Cardiac septum (tissue), 1 donor: ENCODE measurements at regions of chr14 and their contacts with region 1.

Region 1: GRCh38 chr14:22556990-22557623 is 31.9 kb downstream of the DAD1 start:
- DNase-seq: peak; percentile 93

Region 2: DNA sequence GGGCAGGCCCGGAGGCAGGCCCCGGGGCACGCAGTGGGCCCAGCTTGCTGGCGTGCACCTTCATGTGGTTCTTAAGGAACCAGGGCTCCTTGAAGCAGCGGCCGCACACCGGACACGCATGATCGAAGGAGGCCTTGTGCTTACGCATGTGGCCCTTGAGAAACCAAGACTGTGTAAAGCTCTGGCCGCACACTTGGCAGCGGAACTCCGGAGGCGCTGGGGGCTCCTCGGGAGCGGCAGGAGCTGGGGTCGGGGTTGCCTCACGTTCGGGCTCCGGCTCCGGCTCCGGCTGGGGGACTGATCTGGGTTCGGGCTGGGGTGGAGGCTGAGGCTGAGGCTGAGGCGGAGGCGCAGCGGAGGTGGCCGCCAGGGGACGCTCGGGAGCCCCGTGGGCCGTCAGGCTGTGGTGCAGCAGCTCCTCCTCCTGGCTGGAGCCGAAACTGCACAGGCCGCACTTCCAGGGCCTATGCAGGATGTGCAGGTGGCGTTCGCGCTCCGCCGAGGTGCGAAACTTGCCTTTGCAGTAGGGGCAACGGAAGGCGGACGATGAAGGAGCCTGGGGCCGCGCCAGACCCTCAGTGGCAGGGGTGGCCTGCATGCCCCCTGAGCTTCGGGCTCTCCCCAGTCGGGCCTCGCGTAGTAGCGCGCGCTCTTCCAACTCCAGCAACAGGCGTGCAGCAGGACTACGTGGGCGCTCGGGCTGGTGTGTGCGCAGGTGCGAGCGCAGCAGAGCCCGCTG is 1464.7 kb before region 1 on chr14:
- intact Hi-C with region 1: no loop called
- DNase-seq: peak; percentile 96

Region 3: DNA sequence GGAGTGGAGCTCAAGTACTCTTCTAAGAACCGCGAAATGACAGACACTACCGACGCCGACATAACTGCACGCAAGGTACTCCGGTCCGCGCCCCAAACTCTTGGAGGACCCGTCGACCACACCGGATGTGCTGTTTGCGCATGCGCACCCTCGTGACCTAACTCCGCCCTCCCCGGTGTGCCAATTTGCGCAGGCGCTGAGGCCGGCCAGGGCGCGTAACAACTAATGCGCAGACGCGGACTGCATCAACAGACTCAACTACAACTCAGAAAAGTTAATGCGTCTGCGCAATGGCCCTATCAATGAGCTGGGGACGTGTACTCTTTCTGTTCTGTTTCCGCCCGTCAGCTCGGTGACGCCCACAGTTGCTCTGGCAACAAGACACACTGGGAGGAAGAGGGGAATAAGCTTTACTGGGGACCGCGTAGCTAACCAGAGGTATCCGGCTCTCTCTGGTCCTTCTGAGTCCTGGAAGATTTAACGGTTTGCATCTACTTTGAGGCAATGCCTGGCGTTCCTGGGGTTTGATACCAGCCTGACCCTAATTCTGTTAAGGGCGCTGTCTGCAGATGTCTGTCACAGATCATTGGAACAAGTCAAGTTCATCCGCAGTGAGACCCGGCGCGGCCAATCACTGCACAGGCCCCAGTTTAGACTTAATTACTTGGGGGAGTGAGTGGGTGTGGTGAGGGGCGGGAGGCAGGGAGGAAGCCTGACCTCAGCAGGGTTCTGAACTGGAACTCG is 32.2 kb after region 1 on chr14 and contains the start of gene DAD1:
- intact Hi-C with region 1: no loop called
- DNase-seq: peak; percentile 99
- total RNA-seq, gene DAD1: 134 TPM

Region 4: DNA sequence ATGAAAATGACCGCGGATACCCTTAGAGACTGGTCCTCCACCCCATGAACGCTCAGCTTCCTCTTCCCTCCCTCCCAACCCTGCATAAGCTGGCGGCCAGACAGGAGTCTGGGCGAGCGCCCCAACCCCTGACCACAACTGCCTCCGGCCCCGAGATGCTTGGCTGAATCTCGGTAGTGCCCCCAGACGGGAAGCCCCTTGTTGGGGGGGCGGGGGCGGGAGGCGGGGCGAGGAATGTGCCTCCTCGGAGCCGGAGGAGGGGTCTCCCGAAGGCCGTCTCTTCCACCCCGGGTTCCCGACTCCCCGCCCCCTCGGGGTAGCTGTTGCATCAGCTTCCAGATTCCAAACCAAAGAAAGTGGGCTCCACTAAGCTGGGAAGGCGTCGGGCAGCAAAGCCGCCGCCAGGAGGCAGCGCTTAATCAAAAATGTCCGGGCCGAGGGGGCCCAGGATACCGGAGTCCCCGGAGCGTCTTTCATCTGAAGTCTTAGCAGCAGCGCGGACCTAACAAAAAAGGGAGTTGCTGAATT is 265.5 kb after region 1 on chr14:
- intact Hi-C with region 1: loop called (anchors 2 kb)
- DNase-seq: no peak